ENCODE measurements at regions of chr7 and their contacts with region 1.

Region 1: GRCh38 chr7:135977007-135977741 is at the start of gene MTPN:
- DNase-seq: peak; percentile 93 to 98 (median 96)
- ATAC-seq: peak; percentile 88
- H3K4me3 ChIP-seq: peak within 1 kb of the TSS; percentile 89
- H3K4me3 Mint-ChIP-seq: peak within 1 kb of the TSS; percentile 90 to 99 (median 94)
- H3K27ac ChIP-seq: peak within 1 kb of the TSS; percentile 94
- H3K27ac Mint-ChIP-seq: peak within 1 kb of the TSS; percentile 88 to 97 (median 93)
- H3K4me1 ChIP-seq: peaks cover 34 to 53% of the 10 kb centered on the region in 2 donors
- H3K4me1 Mint-ChIP-seq: peaks cover 46 to 81% (median 74%) of the 10 kb centered on the region in 7 donors
- H3K27me3 ChIP-seq: no peaks in the 10 kb centered on the region
- H3K27me3 Mint-ChIP-seq: peaks cover 0 to 2% (median 0%) of the 10 kb centered on the region in 5 donors
- total RNA-seq, gene MTPN: 69.7 to 117 (median 80.7) TPM

Region 2: GRCh38 chr7:134126966-134127848 is 1850.0 kb before region 1 on chr7 and contains the start of gene LRGUK:
- CTCF ChIA-PET with region 1: no interaction called
- POLR2A ChIA-PET with region 1: no interaction called
- intact Hi-C with region 1: loop called in 1 of 2 experiments (anchors 1 kb)
- DNase-seq: peak; percentile 55 to 82 (median 77)
- ATAC-seq: peak; percentile 100
- H3K4me3 ChIP-seq: peak within 1 kb of the TSS; percentile 93
- H3K4me3 Mint-ChIP-seq: peak within 1 kb of the TSS; percentile 80 to 96 (median 88)
- H3K27ac ChIP-seq: no peak within 1 kb of the TSS
- H3K27ac Mint-ChIP-seq: peak within 1 kb of the TSS in 3 of 9 donors; percentile 16 to 65 (median 46)
- H3K4me1 ChIP-seq: peaks cover 3 to 9% of the 10 kb centered on the region in 2 donors
- H3K4me1 Mint-ChIP-seq: peaks cover 15 to 26% (median 18%) of the 10 kb centered on the region in 7 donors
- H3K27me3 ChIP-seq: no peaks in the 10 kb centered on the region
- H3K27me3 Mint-ChIP-seq: peaks cover 20 to 44% (median 23%) of the 10 kb centered on the region in 5 donors
- total RNA-seq, gene LRGUK: 0.22 to 1.0 (median 0.43) TPM

Region 3: GRCh38 chr7:134865001-134865845 is 1112.0 kb before region 1 on chr7:
- CTCF ChIA-PET with region 1: no interaction called
- POLR2A ChIA-PET with region 1: no interaction called
- intact Hi-C with region 1: loop called in 1 of 2 experiments (anchors 10 kb)
- DNase-seq: peak in 8 of 9 donors; percentile 43 to 79 (median 76)
- ATAC-seq: peak; percentile 91
- H3K4me3 ChIP-seq: peak overlapping the region; percentile 51
- H3K4me3 Mint-ChIP-seq: peak overlapping the region; percentile 64 to 90 (median 84)
- H3K27ac ChIP-seq: peak overlapping the region; percentile 68
- H3K27ac Mint-ChIP-seq: peak overlapping the region; percentile 88 to 96 (median 92)
- H3K4me1 ChIP-seq: peaks cover 0 to 13% of the 10 kb centered on the region in 2 donors
- H3K4me1 Mint-ChIP-seq: peaks cover 8 to 76% (median 58%) of the 10 kb centered on the region in 7 donors
- H3K27me3 ChIP-seq: no peaks in the 10 kb centered on the region
- H3K27me3 Mint-ChIP-seq: no peaks in the 10 kb centered on the region

Region 4: DNA sequence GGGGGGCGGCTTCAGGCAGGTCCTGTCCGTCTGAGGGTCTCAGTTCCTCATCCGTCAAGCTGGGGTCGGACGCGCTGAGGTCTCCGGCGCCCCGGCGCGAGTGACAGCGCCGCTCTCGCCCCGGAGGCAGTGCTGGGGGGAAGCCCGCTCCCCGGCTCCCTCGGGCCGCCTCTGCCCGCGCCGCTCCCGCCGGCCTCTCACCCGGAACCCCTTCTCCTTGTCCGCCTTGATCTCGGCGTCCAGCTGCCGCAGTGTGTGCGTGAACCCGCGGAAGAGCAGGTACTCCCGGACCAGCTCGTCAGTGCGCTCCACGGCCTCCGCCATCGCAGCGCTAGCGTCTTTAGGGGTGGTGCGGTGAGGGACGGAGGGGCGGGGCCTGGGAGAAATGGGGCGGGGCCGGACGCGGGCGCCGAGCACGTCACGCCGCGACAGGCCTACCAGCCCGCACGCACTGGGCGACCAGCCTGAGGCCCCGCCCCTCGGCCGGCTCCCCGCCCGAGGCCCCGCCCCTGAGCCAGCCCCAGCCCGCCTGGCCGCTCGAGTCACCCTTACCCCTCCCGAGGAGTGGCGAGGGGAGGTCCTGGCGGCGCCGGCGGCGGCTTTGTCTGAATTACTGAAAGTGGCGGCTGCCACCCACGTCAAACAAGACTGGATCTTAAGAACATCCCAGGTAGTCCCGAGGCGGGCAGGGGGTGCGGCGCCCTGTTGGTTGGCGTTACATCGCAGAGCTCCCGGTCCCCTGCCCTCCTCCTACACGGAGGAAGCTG is 765.8 kb before region 1 on chr7 and contains the start of gene WDR91:
- CTCF ChIA-PET with region 1: no interaction called
- POLR2A ChIA-PET with region 1: no interaction called
- intact Hi-C with region 1: loop called (anchors 1 to 2 kb)
- DNase-seq: peak; percentile 83 to 94 (median 90)
- ATAC-seq: peak; percentile 97
- H3K4me3 ChIP-seq: peak within 1 kb of the TSS; percentile 68
- H3K4me3 Mint-ChIP-seq: peak within 1 kb of the TSS; percentile 91 to 99 (median 96)
- H3K27ac ChIP-seq: peak within 1 kb of the TSS; percentile 92
- H3K27ac Mint-ChIP-seq: peak within 1 kb of the TSS; percentile 94 to 99 (median 98)
- H3K4me1 ChIP-seq: peaks cover 0 to 5% of the 10 kb centered on the region in 2 donors
- H3K4me1 Mint-ChIP-seq: peaks cover 18 to 47% (median 37%) of the 10 kb centered on the region in 7 donors
- H3K27me3 ChIP-seq: no peaks in the 10 kb centered on the region
- H3K27me3 Mint-ChIP-seq: peaks cover 0 to 2% (median 0%) of the 10 kb centered on the region in 5 donors
- total RNA-seq, gene WDR91: 18.2 to 59.2 (median 37.0) TPM

Region 5: DNA sequence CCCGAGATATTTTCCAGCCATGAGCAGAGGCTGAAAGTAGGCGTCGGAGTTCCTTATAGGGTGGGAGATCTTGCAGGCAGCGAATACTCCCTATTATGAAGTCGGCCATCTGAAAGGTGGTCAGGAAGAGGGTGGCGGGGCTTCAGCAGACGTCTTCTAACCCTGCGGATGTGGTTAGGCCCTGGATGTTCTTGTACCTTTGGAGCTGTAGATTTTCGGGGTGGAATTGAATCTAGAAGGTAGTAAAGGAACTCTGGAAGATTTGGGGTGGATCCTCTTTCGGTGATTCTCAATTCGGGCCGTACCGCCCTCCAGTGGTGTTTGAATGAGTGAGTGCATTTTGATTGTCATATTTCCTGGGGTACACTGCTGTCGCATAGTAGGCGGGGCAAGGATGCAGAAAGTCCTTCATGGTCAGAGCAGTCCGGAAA is 418.8 kb before region 1 on chr7:
- CTCF ChIA-PET with region 1: no interaction called
- POLR2A ChIA-PET with region 1: no interaction called
- intact Hi-C with region 1: loop called (anchors 1 to 2 kb)
- DNase-seq: peak; percentile 36 to 71 (median 66)
- ATAC-seq: peak; percentile 78
- H3K4me3 ChIP-seq: peak overlapping the region; percentile 89
- H3K4me3 Mint-ChIP-seq: no peak overlapping the region
- H3K27ac ChIP-seq: peak overlapping the region; percentile 92
- H3K27ac Mint-ChIP-seq: no peak overlapping the region
- H3K4me1 ChIP-seq: peaks cover 6% of the 10 kb centered on the region in 2 donors
- H3K4me1 Mint-ChIP-seq: peaks cover 10 to 35% (median 25%) of the 10 kb centered on the region in 7 donors
- H3K27me3 ChIP-seq: no peaks in the 10 kb centered on the region
- H3K27me3 Mint-ChIP-seq: peaks cover 0 to 6% (median 0%) of the 10 kb centered on the region in 5 donors

Region 6: GRCh38 chr7:135911099-135911498 is 66.1 kb before region 1 on chr7:
- CTCF ChIA-PET with region 1: no interaction called
- POLR2A ChIA-PET with region 1: no interaction called
- intact Hi-C with region 1: no loop called
- DNase-seq: no peak
- ATAC-seq: no peak
- H3K4me3 ChIP-seq: no peak overlapping the region
- H3K4me3 Mint-ChIP-seq: no peak overlapping the region
- H3K27ac ChIP-seq: no peak overlapping the region
- H3K27ac Mint-ChIP-seq: no peak overlapping the region
- H3K4me1 ChIP-seq: no peaks in the 10 kb centered on the region
- H3K4me1 Mint-ChIP-seq: no peaks in the 10 kb centered on the region
- H3K27me3 ChIP-seq: no peaks in the 10 kb centered on the region
- H3K27me3 Mint-ChIP-seq: peaks cover 0 to 3% (median 0%) of the 10 kb centered on the region in 5 donors

Region 7: DNA sequence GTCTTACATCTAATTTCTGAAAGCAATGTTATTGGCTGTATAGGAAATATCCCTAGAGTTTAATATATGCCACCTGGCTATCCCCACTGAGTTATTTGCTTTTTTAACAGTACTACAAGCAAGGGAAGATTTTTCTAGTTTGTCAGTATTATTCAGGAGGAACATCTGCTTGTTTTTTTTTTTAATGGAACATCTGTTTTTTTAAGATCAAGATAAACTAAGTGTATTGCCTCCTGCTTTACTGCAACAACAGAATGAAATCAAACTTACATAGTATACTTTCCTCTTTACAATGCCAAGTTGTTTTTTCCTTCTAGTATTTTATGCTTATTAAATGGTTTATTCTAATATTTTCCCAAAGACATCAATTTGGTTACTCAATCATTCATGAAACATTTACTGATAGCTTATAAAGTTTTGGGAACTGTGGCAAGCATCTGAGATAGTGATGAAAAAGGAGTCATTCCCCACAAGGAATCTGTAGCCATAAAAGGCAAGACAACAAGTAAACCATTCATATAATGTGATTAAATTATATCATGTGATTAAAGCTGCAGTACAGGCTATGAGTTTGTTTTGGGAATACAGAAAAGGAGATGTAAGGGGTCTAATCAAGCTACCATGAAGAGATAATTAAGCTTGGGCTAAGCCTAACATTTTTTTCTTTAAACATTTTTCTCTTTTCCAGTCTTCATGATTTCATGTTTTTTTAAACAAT is 17.4 kb before region 1 on chr7:
- CTCF ChIA-PET with region 1: no interaction called
- POLR2A ChIA-PET with region 1: interaction called, 6 read pairs
- intact Hi-C with region 1: loop called in 1 of 2 experiments (anchors 2 kb)
- DNase-seq: no peak
- ATAC-seq: no peak
- H3K4me3 ChIP-seq: no peak overlapping the region
- H3K4me3 Mint-ChIP-seq: no peak overlapping the region
- H3K27ac ChIP-seq: no peak overlapping the region
- H3K27ac Mint-ChIP-seq: peak overlapping the region in 1 of 9 donors; percentile 12
- H3K4me1 ChIP-seq: peaks cover 0 to 8% of the 10 kb centered on the region in 2 donors
- H3K4me1 Mint-ChIP-seq: peaks cover 29 to 94% (median 89%) of the 10 kb centered on the region in 7 donors
- H3K27me3 ChIP-seq: no peaks in the 10 kb centered on the region
- H3K27me3 Mint-ChIP-seq: no peaks in the 10 kb centered on the region

Region 8: DNA sequence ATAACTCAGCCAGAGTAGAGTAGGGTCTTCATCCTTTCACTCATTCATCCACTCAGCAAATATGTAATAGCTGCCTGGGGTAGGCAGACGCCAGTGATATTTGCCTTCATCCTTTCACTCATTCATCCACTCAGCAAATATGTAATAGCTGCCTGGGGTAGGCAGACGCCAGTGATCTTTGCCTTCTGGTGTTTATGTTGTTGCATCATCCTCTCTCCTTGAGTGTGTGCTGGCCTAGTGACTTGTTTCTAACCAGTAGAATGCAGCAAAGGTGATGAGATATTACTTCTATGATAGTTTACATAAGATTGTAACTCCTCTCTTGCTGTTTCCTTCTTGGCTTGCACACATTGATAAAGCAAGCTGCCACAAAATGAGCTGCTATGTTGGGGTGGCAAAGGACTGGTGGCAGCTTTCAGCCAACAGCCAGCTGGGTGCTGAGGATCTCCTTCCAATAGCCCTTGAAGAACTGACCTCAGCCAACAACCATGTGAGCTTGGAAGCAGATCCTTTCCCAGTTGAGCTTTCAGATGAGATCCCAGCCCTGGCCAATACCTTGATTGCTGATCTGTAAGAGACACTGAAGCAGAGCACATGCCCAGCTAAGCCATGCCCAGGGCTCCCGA is 23.2 kb after region 1 on chr7:
- CTCF ChIA-PET with region 1: no interaction called
- POLR2A ChIA-PET with region 1: no interaction called
- intact Hi-C with region 1: no loop called
- DNase-seq: no peak
- ATAC-seq: no peak
- H3K4me3 ChIP-seq: no peak overlapping the region
- H3K4me3 Mint-ChIP-seq: no peak overlapping the region
- H3K27ac ChIP-seq: no peak overlapping the region
- H3K27ac Mint-ChIP-seq: no peak overlapping the region
- H3K4me1 ChIP-seq: no peaks in the 10 kb centered on the region
- H3K4me1 Mint-ChIP-seq: no peaks in the 10 kb centered on the region
- H3K27me3 ChIP-seq: no peaks in the 10 kb centered on the region
- H3K27me3 Mint-ChIP-seq: no peaks in the 10 kb centered on the region

Region 9: GRCh38 chr7:136412952-136413351 is 435.8 kb after region 1 on chr7:
- CTCF ChIA-PET with region 1: no interaction called
- POLR2A ChIA-PET with region 1: no interaction called
- intact Hi-C with region 1: no loop called
- DNase-seq: no peak
- ATAC-seq: no peak
- H3K4me3 ChIP-seq: no peak overlapping the region
- H3K4me3 Mint-ChIP-seq: no peak overlapping the region
- H3K27ac ChIP-seq: no peak overlapping the region
- H3K27ac Mint-ChIP-seq: no peak overlapping the region
- H3K4me1 ChIP-seq: no peaks in the 10 kb centered on the region
- H3K4me1 Mint-ChIP-seq: no peaks in the 10 kb centered on the region
- H3K27me3 ChIP-seq: no peaks in the 10 kb centered on the region
- H3K27me3 Mint-ChIP-seq: no peaks in the 10 kb centered on the region

Measured in naive thymus-derived CD4-positive, alpha-beta T cell (primary cell).